ENCODE measurements at regions of chr1 and their contacts with region 1.

Region 1: DNA sequence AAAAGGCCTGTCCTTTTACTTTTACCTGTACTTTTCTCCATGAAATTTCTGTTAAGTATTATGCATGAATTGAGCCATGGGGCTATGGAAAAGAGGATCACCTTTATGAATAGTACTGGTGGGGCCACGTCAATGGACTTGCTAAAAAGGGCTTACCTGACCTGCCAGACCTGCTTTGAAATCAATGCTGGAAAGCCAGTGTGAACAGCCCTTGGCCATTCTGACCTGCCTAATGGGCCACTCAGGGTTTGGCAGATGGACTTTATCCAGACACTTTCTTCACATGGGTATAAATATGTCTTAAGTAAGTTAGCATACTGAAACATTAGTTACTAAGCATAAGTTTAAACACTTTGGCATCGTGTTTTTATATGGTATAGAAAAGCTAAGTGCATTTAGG is 8.3 kb upstream of the GUK1 start:
- DNase-seq: no peak
- H3K4me3 ChIP-seq: no peak overlapping the region
- H3K27ac ChIP-seq: no peak overlapping the region
- H3K4me1 ChIP-seq: no peaks in the 10 kb centered on the region; a peak in 1 of 7 replicates
- H3K27me3 ChIP-seq: peaks cover 0 to 21% (median 7%) of the 10 kb centered on the region in 4 experiments; a peak in 6 of 7 replicates
- CTCF ChIP-seq: no peak
- EP300 ChIP-seq: no peak
- POLR2A ChIP-seq: no peak
- RAD21 ChIP-seq: no peak

Region 2: DNA sequence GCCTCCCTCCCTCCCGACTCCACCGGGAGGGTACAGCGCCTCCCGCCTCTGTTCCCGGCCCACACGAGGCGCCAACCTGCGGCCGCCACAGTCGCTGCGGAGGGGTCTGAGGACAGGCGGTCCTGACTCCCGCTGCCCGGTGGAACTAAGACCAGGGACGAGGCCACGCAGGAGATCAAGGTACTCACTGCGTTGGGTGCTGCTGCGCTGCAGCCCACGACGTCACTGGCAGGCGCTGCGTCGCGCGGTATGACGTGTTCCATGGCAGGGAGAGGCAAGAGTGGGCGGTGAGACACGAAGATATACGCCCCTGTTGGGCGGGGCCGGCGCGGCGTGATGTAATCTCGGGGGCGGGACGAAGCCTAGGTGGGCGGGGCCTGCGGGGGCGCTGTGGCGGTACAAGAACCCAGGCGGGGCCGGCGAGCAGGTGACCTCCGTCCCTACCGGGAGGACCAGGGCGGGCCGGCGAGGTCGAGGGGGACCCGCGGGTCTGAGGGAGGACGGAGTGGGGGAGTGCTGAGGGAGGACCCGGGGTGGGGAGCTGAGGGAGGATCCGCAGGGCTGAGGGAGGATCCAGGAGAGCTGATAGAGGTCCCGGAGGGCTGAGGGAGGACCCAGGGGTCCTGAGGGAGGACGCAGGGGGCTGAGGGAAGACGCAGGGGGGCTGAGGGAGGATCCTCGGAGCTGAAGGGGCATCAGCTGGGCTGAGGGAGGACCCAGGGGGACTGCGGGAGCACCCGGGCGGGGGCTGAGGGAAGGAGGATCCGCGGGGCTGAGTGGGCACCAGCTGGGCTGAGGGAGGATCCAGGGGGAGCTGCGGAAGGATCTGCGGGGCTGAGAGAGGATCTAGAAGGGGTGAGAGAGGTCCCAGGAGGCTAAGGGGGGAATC is 22.4 kb before region 1 on chr1 and contains the start of gene MRPL55:
- CTCF ChIA-PET with region 1: interaction called, 14 read pairs
- POLR2A ChIA-PET with region 1: interaction called, 4 read pairs
- DNase-seq: peak; percentile 85 to 100
- H3K4me3 ChIP-seq: peak within 1 kb of the TSS; percentile 71 to 96 (median 88)
- H3K27ac ChIP-seq: peak within 1 kb of the TSS; percentile 83
- H3K4me1 ChIP-seq: peaks cover 0 to 7% (median under 1%) of the 10 kb centered on the region in 4 experiments; a peak in 5 of 7 replicates
- H3K27me3 ChIP-seq: peaks cover 0 to 6% (median 5%) of the 10 kb centered on the region in 4 experiments; a peak in 2 of 7 replicates
- CTCF ChIP-seq: no peak
- EP300 ChIP-seq: no peak
- POLR2A ChIP-seq: peak in 1 of 2 experiments; percentile 86; a peak in 2 of 3 replicates
- RAD21 ChIP-seq: no peak
- total RNA-seq, gene MRPL55: 59.0 and 62.7 TPM in 2 replicates

Region 3: GRCh38 chr1:228120857-228121489 is 10.8 kb before region 1 on chr1:
- CTCF ChIA-PET with region 1: interaction called, 11 read pairs
- POLR2A ChIA-PET with region 1: no interaction called
- DNase-seq: no peak
- H3K4me3 ChIP-seq: no peak overlapping the region
- H3K27ac ChIP-seq: no peak overlapping the region
- H3K4me1 ChIP-seq: no peaks in the 10 kb centered on the region
- H3K27me3 ChIP-seq: no peaks in the 10 kb centered on the region; a peak in 3 of 7 replicates
- CTCF ChIP-seq: no peak
- EP300 ChIP-seq: no peak
- POLR2A ChIP-seq: no peak
- RAD21 ChIP-seq: no peak

Region 4: DNA sequence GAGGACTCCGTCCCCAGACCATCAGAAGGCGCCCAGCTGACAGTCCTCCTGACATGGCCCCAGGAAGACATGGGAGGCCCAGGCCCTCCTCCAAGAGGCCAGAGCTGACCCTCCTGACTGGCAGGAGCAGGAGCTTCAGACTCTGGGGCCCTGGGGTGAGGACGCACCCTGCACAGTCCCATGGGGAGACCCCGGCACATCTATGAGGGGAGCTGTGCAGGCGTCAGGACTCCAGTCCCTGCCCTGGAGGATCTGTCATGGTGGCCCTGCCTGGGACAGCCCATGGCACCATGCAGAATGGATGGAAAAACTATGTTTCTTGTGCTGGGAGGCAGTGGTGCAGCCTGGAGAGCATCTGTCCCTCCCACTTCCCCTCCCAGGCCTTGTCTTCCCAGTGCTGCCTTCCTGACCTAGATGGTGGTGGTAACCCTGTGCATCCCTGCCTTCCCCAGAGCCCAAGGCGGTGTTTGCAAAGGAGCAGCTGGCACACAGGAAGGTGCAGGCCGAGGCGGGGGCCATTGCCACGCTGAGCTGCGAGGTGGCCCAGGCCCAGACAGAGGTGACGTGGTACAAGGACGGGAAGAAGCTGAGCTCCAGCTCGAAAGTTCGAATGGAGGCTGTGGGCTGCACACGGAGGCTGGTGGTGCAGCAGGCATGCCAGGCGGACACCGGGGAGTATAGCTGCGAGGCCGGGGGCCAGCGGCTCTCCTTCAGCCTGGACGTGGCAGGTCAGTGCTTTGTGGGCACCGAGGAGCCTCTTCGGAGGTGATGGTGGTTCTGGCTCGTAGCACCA is 117.9 kb after region 1 on chr1:
- CTCF ChIA-PET with region 1: no interaction called
- POLR2A ChIA-PET with region 1: no interaction called
- DNase-seq: peak in 1 of 2 experiments; percentile 17
- H3K4me3 ChIP-seq: no peak overlapping the region
- H3K27ac ChIP-seq: no peak overlapping the region
- H3K4me1 ChIP-seq: no peaks in the 10 kb centered on the region
- H3K27me3 ChIP-seq: no peaks in the 10 kb centered on the region
- CTCF ChIP-seq: no peak
- EP300 ChIP-seq: no peak
- POLR2A ChIP-seq: no peak
- RAD21 ChIP-seq: no peak

Region 5: DNA sequence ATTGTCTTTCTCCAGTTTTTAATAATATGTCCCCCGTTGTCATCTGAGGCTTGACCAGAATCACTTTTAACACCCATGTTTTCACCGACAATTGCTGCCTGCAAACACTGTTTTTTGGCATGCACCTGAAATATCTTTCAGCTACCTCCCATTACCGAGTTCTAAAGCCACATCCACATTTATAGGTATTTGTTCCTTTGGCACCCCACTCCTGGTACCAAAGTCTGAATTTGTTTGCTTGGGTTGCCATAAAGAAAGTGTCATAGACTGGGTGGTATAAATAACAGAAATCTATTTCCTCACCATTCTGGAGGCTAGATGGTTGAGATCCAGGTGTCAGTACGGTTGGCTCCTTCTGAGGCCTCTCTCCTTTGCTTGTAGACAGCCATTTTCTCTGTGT is 170.3 kb after region 1 on chr1:
- CTCF ChIA-PET with region 1: no interaction called
- POLR2A ChIA-PET with region 1: no interaction called
- DNase-seq: no peak
- H3K4me3 ChIP-seq: 0 out of 8 replicates have a peak overlapping the region, but pooled peaks of 1 of the 4 experiments have one; percentile 14
- H3K27ac ChIP-seq: no peak overlapping the region
- H3K4me1 ChIP-seq: no peaks in the 10 kb centered on the region
- H3K27me3 ChIP-seq: no peaks in the 10 kb centered on the region
- CTCF ChIP-seq: no peak
- EP300 ChIP-seq: no peak
- POLR2A ChIP-seq: no peak
- RAD21 ChIP-seq: no peak